ENCODE measurements at regions of chr6 and their contacts with region 1.

Region 1: DNA sequence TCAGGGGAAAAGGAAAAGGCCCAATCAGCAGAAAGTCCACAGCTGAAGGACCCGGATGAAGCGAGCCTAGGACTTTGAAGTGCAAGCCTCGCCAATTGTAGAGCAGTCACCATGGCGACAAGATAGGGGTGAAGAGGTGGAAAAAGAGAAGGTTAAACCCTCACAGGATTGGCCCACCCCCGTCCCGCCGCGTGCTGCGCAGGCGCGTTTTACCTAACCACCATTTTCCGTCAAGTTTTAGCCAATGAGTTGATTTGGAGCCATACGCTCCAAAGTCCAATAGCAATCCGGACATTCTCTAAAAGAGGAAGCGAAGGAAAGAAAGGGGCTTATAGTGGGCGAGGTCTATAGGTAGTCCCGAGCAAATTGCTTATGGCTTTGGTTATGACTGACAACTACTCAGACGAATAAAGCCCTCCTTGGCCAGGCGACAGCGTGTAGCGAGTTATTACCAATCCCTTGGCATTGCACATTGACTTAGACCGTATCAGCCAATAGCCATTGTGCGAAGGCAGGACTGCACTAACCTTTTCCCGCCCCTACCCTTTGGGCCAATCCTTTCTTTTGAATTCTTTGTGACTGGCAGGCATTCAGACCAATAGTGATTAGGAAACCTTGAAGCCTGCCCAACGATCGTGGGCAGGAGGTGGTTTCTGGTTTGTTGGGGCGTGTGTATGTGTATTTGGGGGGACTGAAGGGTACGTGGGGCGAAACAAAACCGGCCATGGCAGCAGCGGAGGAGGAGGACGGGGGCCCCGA is at the start of gene RNF5:
- DNase-seq: peak; percentile 98
- H3K4me3 Mint-ChIP-seq: peak within 1 kb of the TSS; percentile 86
- H3K27ac Mint-ChIP-seq: peak within 1 kb of the TSS; percentile 95
- H3K4me1 Mint-ChIP-seq: peaks cover 59% of the 10 kb centered on the region
- H3K27me3 Mint-ChIP-seq: no peaks in the 10 kb centered on the region
- total RNA-seq, gene RNF5: 59.9 and 62.6 TPM in 2 replicates

Region 2: DNA sequence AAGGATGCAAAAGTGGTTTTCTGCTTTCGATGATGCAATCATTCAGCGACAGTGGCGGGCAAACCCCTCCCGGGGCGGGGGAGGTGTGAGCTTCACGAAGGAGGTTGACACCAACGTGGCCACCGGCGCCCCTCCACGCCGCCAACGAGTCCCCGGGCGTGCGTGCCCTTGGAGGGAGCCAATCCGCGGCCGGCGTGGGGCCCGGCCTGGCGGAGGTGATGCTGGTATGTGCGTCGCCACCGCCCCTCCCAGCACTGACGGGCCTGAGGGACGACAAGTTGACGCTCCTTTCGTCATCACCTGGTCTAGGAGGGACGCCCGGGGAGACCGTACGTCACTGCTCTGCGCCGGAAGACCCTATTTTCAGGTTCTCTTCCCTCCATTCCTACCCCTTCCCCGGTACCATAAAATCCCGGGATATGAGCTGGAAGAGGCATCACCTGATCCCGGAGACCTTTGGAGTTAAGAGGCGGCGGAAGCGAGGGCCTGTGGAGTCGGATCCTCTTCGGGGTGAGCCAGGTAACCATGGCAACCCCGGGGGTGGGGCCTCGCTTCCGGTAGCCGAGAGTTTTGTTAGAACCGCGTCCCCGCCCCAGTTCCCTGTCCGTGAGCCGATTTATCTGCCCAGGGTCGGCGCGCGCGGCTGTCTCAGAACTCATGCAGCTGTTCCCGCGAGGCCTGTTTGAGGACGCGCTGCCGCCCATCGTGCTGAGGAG is 205.8 kb before region 1 on chr6 and contains the start of gene DXO:
- intact Hi-C with region 1: loop called (anchors 1 kb)
- DNase-seq: peak; percentile 99
- H3K4me3 Mint-ChIP-seq: peak within 1 kb of the TSS; percentile 99
- H3K27ac Mint-ChIP-seq: peak within 1 kb of the TSS; percentile 100
- H3K4me1 Mint-ChIP-seq: peaks cover 41% of the 10 kb centered on the region
- H3K27me3 Mint-ChIP-seq: peaks cover 2% of the 10 kb centered on the region
- total RNA-seq, gene DXO: 13.2 and 14.1 TPM in 2 replicates

Region 3: DNA sequence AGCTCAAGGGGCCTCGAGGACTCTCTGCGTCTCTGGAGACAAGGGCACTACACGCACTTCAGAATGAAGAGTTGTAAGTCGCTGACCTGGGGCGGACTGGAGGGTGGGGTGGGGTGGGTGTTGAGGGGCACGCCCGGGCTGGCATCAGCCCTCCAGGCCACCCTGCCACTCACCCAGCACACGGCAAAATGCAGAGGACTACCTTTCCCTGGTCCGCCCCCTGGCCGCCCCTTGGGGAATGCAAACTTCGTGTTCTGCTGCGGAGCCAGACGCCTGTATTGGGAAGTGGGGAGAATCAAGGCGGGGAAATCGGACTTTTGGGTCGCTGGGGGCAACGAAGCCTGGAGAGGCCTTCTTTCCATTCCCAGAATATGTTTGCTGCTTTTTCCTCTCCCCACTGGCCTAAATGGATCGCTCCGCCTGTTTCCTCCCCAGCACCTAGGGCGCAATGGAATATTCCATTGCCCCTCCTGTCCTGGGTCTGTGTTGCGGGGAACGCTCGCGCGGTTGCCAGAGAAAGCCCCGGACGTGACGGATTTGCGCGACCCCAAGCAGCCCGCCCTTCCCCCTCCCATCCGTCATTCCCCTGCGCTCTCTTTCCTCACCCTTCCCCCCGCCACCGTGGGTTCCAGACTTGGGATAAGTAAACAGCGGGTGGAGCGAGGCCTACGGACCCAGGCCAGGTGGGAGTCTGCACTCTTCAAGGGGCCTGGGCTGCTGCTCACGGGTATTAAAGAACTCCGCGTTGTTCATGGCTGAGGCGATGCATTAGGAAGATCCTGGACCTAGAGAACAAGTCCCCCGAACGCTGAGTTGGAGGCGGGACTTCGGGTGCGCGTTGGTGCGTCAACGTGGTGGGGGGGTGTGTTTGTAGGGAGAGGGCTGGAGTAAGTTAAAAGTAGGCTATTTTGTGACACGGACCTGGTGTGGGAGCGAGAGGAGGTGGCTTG is 24.1 kb before region 1 on chr6 and contains the start of gene PPT2:
- intact Hi-C with region 1: loop called (anchors 1 kb)
- DNase-seq: peak; percentile 89
- H3K4me3 Mint-ChIP-seq: peak within 1 kb of the TSS; percentile 84
- H3K27ac Mint-ChIP-seq: peak within 1 kb of the TSS; percentile 72
- H3K4me1 Mint-ChIP-seq: peaks cover 31% of the 10 kb centered on the region
- H3K27me3 Mint-ChIP-seq: peaks cover 34% of the 10 kb centered on the region
- total RNA-seq, gene PPT2: 11.3 and 12.7 TPM in 2 replicates

Region 4: DNA sequence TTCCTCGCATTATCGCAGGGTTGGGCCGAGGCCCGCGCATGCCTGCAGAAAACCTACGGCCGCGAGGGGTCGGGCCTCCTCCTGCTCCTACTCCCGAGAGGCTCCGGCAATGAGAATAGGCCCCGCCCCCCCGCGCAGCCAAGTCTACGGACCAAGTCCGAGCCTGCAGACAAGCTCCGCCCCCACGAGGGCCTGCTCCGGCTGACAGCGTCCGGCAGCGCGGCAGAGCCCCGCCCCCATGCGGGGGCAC is 17.6 kb after region 1 on chr6:
- intact Hi-C with region 1: loop called (anchors 1 kb)
- DNase-seq: peak; percentile 100
- H3K4me3 Mint-ChIP-seq: peak overlapping the region; percentile 98
- H3K27ac Mint-ChIP-seq: peak overlapping the region; percentile 99
- H3K4me1 Mint-ChIP-seq: peaks cover 40% of the 10 kb centered on the region
- H3K27me3 Mint-ChIP-seq: peaks cover 2% of the 10 kb centered on the region

Region 5: DNA sequence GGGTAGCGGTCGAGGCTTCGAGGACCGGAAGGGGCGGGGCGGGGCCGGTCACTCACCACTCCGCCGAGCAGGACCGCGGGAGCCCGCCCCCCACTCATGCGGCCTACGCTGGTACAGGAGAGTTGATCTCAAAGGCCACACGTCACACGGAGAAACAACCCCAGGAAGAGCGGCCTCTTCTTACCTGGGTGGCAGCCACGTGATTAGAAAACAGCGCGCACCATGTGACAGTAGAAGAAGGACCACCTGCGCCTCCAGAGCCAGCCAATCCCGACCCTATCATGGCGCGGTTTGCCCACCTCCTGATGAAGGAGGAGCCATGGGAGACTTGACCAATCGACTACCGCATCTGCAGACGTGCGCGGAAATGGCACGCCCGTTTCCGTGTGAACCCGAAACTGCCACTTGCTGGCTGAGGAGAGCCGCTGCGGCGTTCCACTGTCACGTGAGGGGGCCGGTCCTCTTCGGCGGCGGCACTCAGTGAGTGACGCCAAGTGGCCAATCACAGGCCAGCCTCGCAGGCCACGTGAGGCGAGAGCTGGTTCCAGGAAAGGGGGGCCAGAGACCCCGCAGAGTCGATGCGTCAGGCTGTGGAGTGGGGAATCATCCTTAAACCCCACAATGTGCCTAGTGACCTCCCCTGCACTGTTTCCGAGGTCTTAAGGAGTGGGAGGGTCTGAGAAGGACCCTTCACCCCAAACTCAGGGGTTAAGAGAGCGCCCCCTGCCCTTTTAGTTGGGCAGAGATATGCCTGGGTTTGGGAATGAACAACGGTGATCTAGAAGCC is 1240.1 kb after region 1 on chr6 and contains the start of gene CUTA:
- intact Hi-C with region 1: loop called (anchors 10 kb)
- DNase-seq: peak; percentile 100
- H3K4me3 Mint-ChIP-seq: peak within 1 kb of the TSS; percentile 92
- H3K27ac Mint-ChIP-seq: peak within 1 kb of the TSS; percentile 96
- H3K4me1 Mint-ChIP-seq: peaks cover 63% of the 10 kb centered on the region
- H3K27me3 Mint-ChIP-seq: peaks cover 1% of the 10 kb centered on the region
- total RNA-seq, gene CUTA: 120 and 124 TPM in 2 replicates

Measured in activated CD4-positive, alpha-beta T cell treated with anti-CD3 and anti-CD28 coated beads, Interleukin-2, amount 10 ng/mL, durations not matched to agents 24 days and 14 days (primary cell).